Thyroid gland (tissue), 4 donors: ENCODE measurements at regions of chr10 and their contacts with region 1.

Region 1: DNA sequence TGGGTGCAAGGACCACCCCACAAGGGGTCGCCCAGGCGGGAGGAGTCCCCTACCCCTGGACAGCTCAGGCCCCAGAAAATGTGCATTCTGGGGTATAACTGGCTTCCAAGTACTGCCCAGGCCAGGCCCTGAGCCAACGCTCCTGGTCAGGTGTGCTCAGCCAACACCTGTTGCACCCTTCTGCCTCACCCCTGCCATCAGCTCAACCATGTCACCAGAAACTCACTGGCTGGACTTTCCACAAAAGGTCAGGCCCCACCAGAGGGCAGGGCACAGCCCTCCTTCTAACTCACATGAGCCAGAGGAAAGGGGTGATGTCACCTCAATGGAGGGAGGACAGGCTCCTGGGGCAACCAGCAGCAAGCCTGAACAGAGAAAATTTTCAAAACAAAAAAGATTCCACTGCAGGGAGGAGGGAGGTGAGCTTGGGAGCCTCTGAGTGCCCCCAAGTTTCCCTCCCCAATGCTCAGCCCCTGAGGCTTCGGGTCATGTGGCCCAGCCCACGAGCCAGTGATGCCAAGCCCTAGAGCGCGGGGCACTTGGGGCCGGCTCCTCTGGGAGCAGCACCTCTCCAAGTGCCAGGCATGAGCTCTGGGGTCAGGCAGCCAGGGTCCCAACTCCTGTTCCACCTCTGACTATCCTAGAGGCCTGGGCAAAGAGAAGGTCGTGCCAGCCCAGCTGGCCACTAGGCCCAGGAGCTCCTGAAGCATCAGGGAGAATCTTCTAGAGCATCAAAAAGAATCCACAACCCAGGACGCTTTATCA is 2.2 kb downstream of the OGDHL start:
- DNase-seq: peak; percentile 34 to 52
- H3K4me3 ChIP-seq: no peak overlapping the region
- H3K27ac ChIP-seq: no peak overlapping the region
- H3K4me1 ChIP-seq: peaks cover 13 to 16% of the 10 kb centered on the region in 2 donors
- H3K27me3 ChIP-seq: no peaks in the 10 kb centered on the region
- CTCF ChIP-seq: no peak
- POLR2A ChIP-seq: no peak

Region 2: DNA sequence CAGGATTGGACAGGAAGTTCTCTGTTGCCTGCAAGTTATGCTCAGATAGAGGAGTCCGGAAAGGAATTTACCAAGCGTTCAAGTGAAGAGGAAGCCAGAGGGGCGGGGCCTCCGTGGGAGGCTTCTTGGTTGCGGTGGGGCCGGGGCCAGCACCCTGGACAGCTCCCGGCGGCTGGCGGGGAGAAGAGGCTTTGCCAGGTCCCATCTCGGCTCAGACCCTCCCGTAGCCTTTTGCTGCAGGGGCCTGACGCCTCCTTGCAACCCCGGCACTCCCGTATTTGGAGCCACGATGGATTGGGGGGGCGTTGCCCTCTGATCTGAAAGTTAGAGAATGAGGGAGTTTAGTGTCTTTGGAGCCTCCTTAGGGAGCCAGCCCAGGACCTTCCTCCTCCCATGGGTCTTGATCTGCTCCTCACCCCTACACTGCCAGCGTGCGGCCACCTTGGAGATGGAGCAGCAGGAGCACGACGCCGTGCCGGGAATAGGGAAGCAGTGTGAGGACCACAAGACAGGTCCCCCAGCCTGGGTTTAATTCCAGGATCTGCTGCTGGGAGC is 152.9 kb before region 1 on chr10:
- intact Hi-C with region 1: loop called (anchors 10 kb)
- DNase-seq: peak; percentile 80 to 83
- H3K4me3 ChIP-seq: no peak overlapping the region
- H3K27ac ChIP-seq: no peak overlapping the region
- H3K4me1 ChIP-seq: peaks cover 7 to 16% of the 10 kb centered on the region in 2 donors
- H3K27me3 ChIP-seq: peaks cover 31% of the 10 kb centered on the region
- CTCF ChIP-seq: no peak
- POLR2A ChIP-seq: no peak

Region 3: DNA sequence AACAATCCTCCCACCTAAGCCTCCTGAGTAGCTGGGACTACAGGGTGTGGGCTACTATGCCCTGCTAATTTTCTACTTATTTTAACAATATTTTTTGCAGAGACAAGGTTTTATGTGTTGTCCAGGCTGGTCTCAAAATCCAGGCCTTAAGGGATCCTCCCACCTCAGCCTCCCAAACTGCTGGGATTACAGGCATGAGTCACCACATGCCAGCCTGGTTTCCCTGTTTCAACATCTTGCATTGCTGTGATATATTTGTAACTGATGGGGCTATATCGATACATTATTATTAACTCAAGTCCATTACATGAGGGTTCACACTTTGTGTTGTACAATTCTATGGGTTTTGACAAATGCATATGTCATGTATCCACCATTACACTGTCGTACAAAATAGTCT is 44.0 kb after region 1 on chr10:
- intact Hi-C with region 1: no loop called
- DNase-seq: no peak
- H3K4me3 ChIP-seq: no peak overlapping the region
- H3K27ac ChIP-seq: no peak overlapping the region
- H3K4me1 ChIP-seq: no peaks in the 10 kb centered on the region
- H3K27me3 ChIP-seq: no peaks in the 10 kb centered on the region
- CTCF ChIP-seq: no peak
- POLR2A ChIP-seq: no peak